CD4-positive, alpha-beta memory T cell (primary cell): ENCODE measurements at regions of chr2 and their contacts with region 1.

Region 1: GRCh38 chr2:174593574-174594203 is 3.9 kb downstream of the WIPF1 start:
- DNase-seq: peak; percentile 86 to 90 (median 88)
- H3K4me3 ChIP-seq: peak overlapping the region; percentile 54 to 80
- H3K4me3 Mint-ChIP-seq: peak overlapping the region; percentile 88 to 100 (median 98)
- H3K27ac ChIP-seq: peak overlapping the region; percentile 89
- H3K27ac Mint-ChIP-seq: peak overlapping the region; percentile 92 to 100 (median 98)
- H3K4me1 ChIP-seq: peaks cover 63% of the 10 kb centered on the region
- H3K4me1 Mint-ChIP-seq: peaks cover 40 to 79% (median 53%) of the 10 kb centered on the region in 4 donors
- H3K27me3 ChIP-seq: no peaks in the 10 kb centered on the region
- H3K27me3 Mint-ChIP-seq: peaks cover 0 to 1% of the 10 kb centered on the region in 2 donors

Region 2: GRCh38 chr2:173965329-173966025 is 628.2 kb before region 1 on chr2 and contains the start of gene SP3:
- CTCF ChIA-PET with region 1: no interaction called
- POLR2A ChIA-PET with region 1: no interaction called
- intact Hi-C with region 1: loop called (anchors 10 kb)
- DNase-seq: peak; percentile 95 to 97 (median 96)
- H3K4me3 ChIP-seq: peak within 1 kb of the TSS; percentile 53 to 83
- H3K4me3 Mint-ChIP-seq: peak within 1 kb of the TSS; percentile 90 to 99 (median 96)
- H3K27ac ChIP-seq: peak within 1 kb of the TSS; percentile 96
- H3K27ac Mint-ChIP-seq: peak within 1 kb of the TSS; percentile 94 to 100 (median 98)
- H3K4me1 ChIP-seq: peaks cover 33% of the 10 kb centered on the region
- H3K4me1 Mint-ChIP-seq: peaks cover 23 to 51% (median 35%) of the 10 kb centered on the region in 4 donors
- H3K27me3 ChIP-seq: no peaks in the 10 kb centered on the region
- H3K27me3 Mint-ChIP-seq: no peaks in the 10 kb centered on the region
- total RNA-seq, gene SP3: 117 to 130 TPM

Region 3: DNA sequence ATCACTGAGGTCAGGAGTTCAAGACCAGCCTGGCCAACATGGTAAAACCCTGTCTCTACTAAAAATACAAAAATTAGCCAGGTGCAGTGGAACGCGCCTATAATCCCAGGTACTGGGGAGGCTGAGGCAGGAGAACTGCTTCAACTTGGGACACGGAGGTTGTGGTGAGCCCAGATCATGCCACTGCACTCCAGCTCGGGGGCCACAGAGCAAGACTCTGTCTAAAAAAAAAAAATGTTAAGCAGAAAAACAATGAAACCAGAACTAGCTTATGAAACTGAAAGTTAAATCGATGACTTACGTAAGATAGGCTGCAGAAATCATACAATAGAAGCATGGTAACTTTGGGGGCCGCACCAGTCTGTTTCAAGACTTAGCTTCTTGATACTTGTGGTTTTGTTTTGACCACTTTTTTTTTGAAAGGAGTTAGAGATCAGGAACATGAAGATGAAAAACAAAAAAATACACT is 100.7 kb before region 1 on chr2:
- CTCF ChIA-PET with region 1: interaction called, 4 read pairs
- POLR2A ChIA-PET with region 1: interaction called, 63 read pairs
- intact Hi-C with region 1: no loop called
- DNase-seq: peak; percentile 76 to 86 (median 83)
- H3K4me3 ChIP-seq: peak overlapping the region; percentile 33 to 35
- H3K4me3 Mint-ChIP-seq: peak overlapping the region; percentile 84 to 95 (median 90)
- H3K27ac ChIP-seq: peak overlapping the region; percentile 78
- H3K27ac Mint-ChIP-seq: peak overlapping the region; percentile 91 to 98 (median 96)
- H3K4me1 ChIP-seq: peaks cover 80% of the 10 kb centered on the region
- H3K4me1 Mint-ChIP-seq: peaks cover 49 to 87% (median 66%) of the 10 kb centered on the region in 4 donors
- H3K27me3 ChIP-seq: no peaks in the 10 kb centered on the region
- H3K27me3 Mint-ChIP-seq: no peaks in the 10 kb centered on the region

Region 4: DNA sequence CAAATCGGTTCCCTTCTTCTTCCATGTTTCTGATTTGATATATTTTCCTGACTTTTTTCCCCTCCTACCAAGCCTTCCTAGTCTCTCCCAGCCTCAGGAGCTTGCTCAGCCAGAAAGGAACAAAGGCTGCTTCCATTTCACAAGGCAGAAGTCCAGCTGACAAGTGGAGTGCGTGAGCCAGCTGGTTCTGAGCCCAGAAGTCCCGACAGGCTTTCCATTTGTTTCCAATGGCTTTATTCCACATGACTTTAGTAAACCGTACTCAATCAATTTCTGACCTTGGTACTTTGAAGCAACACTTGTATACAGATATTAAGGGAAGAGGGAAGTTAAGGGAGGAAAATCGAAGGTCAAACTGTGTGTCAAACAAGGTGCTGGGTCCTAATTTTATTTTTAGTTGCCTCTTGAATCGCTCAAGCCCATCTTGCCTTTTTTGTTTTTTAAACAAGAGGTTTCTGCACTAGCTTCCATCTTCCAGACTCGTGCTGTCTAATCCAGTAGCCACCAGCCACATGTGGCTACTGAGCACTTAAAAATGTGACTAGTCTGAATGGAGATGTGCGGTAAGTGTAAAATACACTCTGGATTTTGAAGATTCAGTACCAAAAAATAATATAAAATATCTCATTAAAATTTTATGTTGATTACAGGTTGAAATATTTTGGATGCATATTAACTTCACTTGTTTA is 32.3 kb before region 1 on chr2:
- CTCF ChIA-PET with region 1: interaction called, 430 read pairs
- POLR2A ChIA-PET with region 1: interaction called, 53 read pairs
- intact Hi-C with region 1: no loop called
- DNase-seq: no peak
- H3K4me3 ChIP-seq: no peak overlapping the region
- H3K4me3 Mint-ChIP-seq: no peak overlapping the region
- H3K27ac ChIP-seq: no peak overlapping the region
- H3K27ac Mint-ChIP-seq: peak overlapping the region in 6 of 7 donors; percentile 36 to 94 (median 72)
- H3K4me1 ChIP-seq: no peaks in the 10 kb centered on the region
- H3K4me1 Mint-ChIP-seq: peaks cover 4 to 14% (median 12%) of the 10 kb centered on the region in 4 donors
- H3K27me3 ChIP-seq: no peaks in the 10 kb centered on the region
- H3K27me3 Mint-ChIP-seq: no peaks in the 10 kb centered on the region

Region 5: DNA sequence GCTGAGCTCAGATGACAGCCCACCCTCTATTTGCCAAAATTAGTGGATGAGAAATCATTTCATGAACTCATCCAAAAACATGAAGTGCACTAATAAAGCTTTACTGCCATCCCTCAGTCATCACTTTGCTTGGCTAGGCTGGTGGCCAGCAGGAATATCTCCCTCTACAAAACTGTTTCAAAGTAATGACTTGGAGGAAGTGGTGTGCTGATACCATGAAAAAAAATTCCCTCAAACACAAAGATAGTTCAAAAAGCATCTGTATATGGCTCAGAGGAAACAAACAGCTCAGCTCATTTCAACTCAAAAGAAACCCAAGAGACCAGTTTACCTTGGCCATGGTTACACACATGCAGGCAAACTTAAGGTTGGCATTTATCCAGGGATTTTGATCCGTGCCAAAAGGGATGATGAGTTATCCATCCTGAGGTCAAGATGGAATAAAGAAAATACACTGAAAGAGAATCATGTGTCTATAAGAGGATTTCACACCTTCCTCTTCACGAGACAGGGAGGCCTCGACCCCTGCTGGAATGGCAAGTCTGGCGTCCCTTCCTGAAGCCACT is 22.3 kb after region 1 on chr2:
- CTCF ChIA-PET with region 1: interaction called, 12 read pairs
- POLR2A ChIA-PET with region 1: interaction called, 233 read pairs
- intact Hi-C with region 1: no loop called
- DNase-seq: no peak
- H3K4me3 ChIP-seq: no peak overlapping the region
- H3K4me3 Mint-ChIP-seq: peak overlapping the region in 7 of 8 donors; percentile 23 to 74 (median 52)
- H3K27ac ChIP-seq: peak overlapping the region; percentile 38
- H3K27ac Mint-ChIP-seq: peak overlapping the region; percentile 49 to 89 (median 78)
- H3K4me1 ChIP-seq: peaks cover 88% of the 10 kb centered on the region
- H3K4me1 Mint-ChIP-seq: peaks cover 61 to 94% (median 81%) of the 10 kb centered on the region in 4 donors
- H3K27me3 ChIP-seq: no peaks in the 10 kb centered on the region
- H3K27me3 Mint-ChIP-seq: no peaks in the 10 kb centered on the region

Region 6: DNA sequence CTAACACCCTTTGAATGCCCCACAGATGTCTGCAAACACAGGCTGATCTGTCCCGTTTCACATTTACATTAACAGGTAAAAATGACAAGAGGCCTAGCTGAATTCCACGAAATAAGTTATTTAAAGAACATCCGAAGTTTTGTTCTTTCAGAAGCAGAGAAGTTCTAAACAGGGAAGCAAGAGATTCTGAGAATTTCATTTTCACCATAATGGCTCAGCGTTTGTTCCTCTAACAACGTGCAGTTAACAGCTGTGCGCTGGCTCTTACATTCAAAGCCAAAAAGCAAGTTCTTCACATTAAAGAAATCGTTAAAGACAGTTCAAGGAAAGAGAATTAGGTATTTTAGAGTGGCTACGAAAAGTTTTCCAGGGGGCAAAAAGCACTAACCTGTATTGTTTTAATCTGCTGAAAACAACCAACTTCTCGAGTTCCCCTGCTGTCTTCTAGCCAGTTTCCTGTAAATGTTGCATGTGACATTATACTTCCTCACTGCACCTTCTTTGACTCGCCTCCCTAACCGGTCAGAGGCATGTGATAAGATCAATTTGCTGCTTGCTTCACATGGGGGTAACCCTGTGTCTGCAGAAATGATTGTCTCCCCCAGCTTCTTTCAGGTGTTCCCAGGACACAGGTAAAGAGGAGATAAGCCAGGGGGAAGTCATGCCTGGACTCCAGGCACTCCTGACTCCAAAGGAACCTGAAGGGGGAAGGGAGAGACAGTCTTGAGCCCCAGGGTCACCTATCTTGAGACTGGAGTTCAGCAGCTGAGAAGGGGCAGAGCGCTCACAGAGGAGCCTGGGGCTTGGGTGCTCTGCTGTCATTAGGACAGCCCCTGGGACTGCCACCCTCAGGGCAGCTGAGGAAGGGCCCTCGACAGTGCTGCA is 40.7 kb after region 1 on chr2:
- CTCF ChIA-PET with region 1: interaction called, 12 read pairs
- POLR2A ChIA-PET with region 1: interaction called, 139 read pairs
- intact Hi-C with region 1: loop called (anchors 5 kb)
- DNase-seq: peak; percentile 48 to 66 (median 53)
- H3K4me3 ChIP-seq: peak overlapping the region; percentile 54 to 72
- H3K4me3 Mint-ChIP-seq: peak overlapping the region; percentile 91 to 94 (median 92)
- H3K27ac ChIP-seq: peak overlapping the region; percentile 76
- H3K27ac Mint-ChIP-seq: peak overlapping the region; percentile 89 to 98 (median 94)
- H3K4me1 ChIP-seq: peaks cover 58% of the 10 kb centered on the region
- H3K4me1 Mint-ChIP-seq: peaks cover 46 to 84% (median 56%) of the 10 kb centered on the region in 4 donors
- H3K27me3 ChIP-seq: no peaks in the 10 kb centered on the region
- H3K27me3 Mint-ChIP-seq: no peaks in the 10 kb centered on the region